HEK293 (cell line): ENCODE measurements at regions of chr2 and their contacts with region 1.

Region 1: DNA sequence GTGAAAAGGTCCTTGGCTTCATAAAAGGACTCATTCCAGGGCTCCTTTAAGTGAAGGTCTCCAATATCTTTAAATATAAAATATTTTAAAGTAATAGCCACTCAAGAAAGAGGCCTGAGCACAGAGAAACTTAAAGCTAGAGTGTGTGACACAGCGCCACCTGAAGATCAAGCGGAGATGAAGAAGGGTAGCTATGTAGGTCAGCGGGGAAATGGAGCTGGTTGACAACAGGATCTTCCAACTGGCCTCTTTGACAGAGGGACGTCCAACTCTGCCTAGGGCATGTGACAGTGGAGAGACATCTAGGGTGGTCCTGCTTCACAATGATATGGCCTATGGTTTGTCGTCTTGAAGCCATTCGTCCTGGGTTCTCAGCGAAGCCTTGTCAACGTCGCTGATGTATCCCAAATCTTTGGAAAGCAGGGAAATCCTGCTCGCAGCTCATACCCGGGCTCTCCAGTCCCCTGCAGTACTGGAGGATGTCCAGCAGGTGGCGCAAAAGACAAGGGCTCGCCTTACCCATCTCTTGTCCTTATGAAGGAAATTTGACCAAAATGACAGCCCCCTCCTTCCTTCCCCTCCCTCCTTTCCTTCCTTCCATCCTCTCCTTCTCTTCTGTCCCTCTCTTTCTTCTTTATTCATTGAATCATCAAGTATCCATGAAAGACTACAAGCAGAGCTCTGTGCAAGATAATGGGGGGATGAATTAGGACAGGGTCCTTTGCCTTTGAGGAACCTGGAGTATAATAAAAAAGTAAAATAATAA is 59.6 kb downstream of the LONRF2 start:
- H3K4me3 ChIP-seq: no peak overlapping the region
- H3K27ac ChIP-seq: no peak overlapping the region
- H3K4me1 ChIP-seq: no peaks in the 10 kb centered on the region
- CTCF ChIP-seq: peak; percentile 71; the same call in 1 of the 2 replicates

Region 2: GRCh38 chr2:99559075-99559662 is 703.6 kb before region 1 on chr2:
- CTCF ChIA-PET with region 1: interaction called, 61 read pairs
- POLR2A ChIA-PET with region 1: no interaction called
- H3K4me3 ChIP-seq: no peak overlapping the region
- H3K27ac ChIP-seq: no peak overlapping the region
- H3K4me1 ChIP-seq: no peaks in the 10 kb centered on the region
- CTCF ChIP-seq: peak; percentile 83

Region 3: GRCh38 chr2:99903981-99904380 is 358.8 kb before region 1 on chr2:
- CTCF ChIA-PET with region 1: no interaction called
- POLR2A ChIA-PET with region 1: no interaction called
- H3K4me3 ChIP-seq: no peak overlapping the region
- H3K27ac ChIP-seq: no peak overlapping the region
- H3K4me1 ChIP-seq: no peaks in the 10 kb centered on the region
- CTCF ChIP-seq: no peak

Region 4: GRCh38 chr2:100291120-100291970 is 28.6 kb after region 1 on chr2:
- CTCF ChIA-PET with region 1: interaction called, 48 read pairs
- POLR2A ChIA-PET with region 1: interaction called, 3 read pairs
- H3K4me3 ChIP-seq: no peak overlapping the region
- H3K27ac ChIP-seq: peak overlapping the region; percentile 54
- H3K4me1 ChIP-seq: peaks cover 16% of the 10 kb centered on the region
- CTCF ChIP-seq: no peak

Region 5: GRCh38 chr2:100365434-100365833 is 102.7 kb after region 1 on chr2:
- CTCF ChIA-PET with region 1: interaction called, 27 read pairs
- POLR2A ChIA-PET with region 1: no interaction called
- H3K4me3 ChIP-seq: no peak overlapping the region
- H3K27ac ChIP-seq: no peak overlapping the region
- H3K4me1 ChIP-seq: no peaks in the 10 kb centered on the region; the same call in 1 of the 2 replicates
- CTCF ChIP-seq: no peak

Region 6: GRCh38 chr2:100422320-100423055 is 159.8 kb after region 1 on chr2:
- CTCF ChIA-PET with region 1: interaction called, 12 read pairs
- POLR2A ChIA-PET with region 1: no interaction called
- H3K4me3 ChIP-seq: no peak overlapping the region
- H3K27ac ChIP-seq: no peak overlapping the region
- H3K4me1 ChIP-seq: no peaks in the 10 kb centered on the region
- CTCF ChIP-seq: no peak